IMR-90 (cell line): ENCODE measurements at regions of chr9 and their contacts with region 1.

Region 1: GRCh38 chr9:19154135-19154612 is 26.9 kb upstream of the PLIN2 start:
- DNase-seq: peak; percentile 96
- ATAC-seq: peak; percentile 97
- H3K4me3 ChIP-seq: no peak overlapping the region
- H3K27ac ChIP-seq: peak overlapping the region; percentile 19; the same call in 1 of the 2 replicates
- H3K4me1 ChIP-seq: peaks cover 12% of the 10 kb centered on the region
- H3K27me3 ChIP-seq: no peaks in the 10 kb centered on the region
- CTCF ChIP-seq: no peak
- POLR2A ChIP-seq: no peak
- RAD21 ChIP-seq: no peak; the same call in 1 of the 2 replicates

Region 2: GRCh38 chr9:19085295-19085694 is 68.9 kb before region 1 on chr9:
- CTCF ChIA-PET with region 1: no interaction called
- POLR2A ChIA-PET with region 1: no interaction called
- dilution Hi-C with region 1: no loop called
- in situ Hi-C with region 1: no loop called
- intact Hi-C with region 1: no loop called
- DNase-seq: no peak
- ATAC-seq: no peak
- H3K4me3 ChIP-seq: no peak overlapping the region
- H3K27ac ChIP-seq: no peak overlapping the region
- H3K4me1 ChIP-seq: no peaks in the 10 kb centered on the region
- H3K27me3 ChIP-seq: no peaks in the 10 kb centered on the region
- CTCF ChIP-seq: peak; percentile 19; the same call in 1 of the 2 replicates
- POLR2A ChIP-seq: no peak
- RAD21 ChIP-seq: no peak

Region 3: DNA sequence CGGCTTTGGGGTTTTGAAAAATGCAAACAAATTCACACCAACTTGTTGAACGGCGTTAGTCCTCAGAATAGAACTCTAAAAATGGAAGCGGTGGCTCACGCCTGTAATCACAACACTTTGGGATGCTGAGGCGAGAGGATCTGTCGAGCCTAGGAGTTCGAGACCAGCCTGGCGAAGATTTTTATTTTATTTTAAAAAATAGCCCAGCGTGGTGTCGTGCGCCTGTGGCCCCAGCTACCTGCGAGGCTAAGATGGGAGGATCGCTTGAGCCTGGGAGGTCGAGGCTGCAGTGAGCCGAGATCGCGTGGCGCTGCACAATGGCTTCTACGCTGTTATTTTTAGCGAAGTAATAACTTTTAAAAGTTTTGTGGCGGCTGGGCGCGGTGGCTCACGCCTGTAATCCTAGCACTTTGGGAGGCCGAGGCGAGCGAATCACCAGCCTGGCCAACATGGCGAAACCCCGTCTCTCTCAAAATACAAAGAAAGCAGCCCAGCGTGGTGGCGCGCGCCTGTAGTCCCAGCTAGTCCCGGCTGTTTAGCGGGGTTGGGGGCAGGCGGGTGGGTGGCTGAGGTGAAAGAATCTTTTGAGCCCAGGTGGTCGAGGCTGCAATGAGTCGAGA is 26.2 kb before region 1 on chr9:
- CTCF ChIA-PET with region 1: no interaction called
- POLR2A ChIA-PET with region 1: no interaction called
- dilution Hi-C with region 1: no loop called
- in situ Hi-C with region 1: no loop called
- intact Hi-C with region 1: loop called (anchors 1 kb)
- DNase-seq: no peak
- ATAC-seq: peak; percentile 27
- H3K4me3 ChIP-seq: peak overlapping the region; percentile 65
- H3K27ac ChIP-seq: peak overlapping the region; percentile 72
- H3K4me1 ChIP-seq: peaks cover 16% of the 10 kb centered on the region
- H3K27me3 ChIP-seq: no peaks in the 10 kb centered on the region
- CTCF ChIP-seq: no peak
- POLR2A ChIP-seq: no peak
- RAD21 ChIP-seq: no peak